HEK293 (cell line): ENCODE measurements at regions of chr20 and their contacts with region 1.

Region 1: DNA sequence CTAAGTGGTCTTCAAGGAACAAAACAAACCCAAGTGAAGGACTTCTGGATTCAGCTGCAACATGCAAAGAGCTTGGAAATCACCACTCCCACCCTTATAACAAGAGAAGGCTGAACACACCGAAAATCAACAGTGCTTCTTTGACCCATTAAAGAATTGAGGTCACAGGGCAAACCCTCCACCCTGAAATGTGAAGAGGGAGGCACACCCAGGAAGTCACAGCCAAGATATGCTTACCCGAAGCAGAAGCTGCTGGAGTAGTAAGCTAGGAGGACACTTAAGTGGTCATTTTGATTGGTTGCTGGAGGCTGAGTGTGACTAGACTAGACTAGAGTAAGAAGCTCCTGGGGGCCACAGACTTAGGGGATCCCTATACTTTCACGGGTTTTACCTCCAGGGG is 188.2 kb upstream of the SSTR4 start:
- H3K4me3 ChIP-seq: no peak overlapping the region
- H3K27ac ChIP-seq: no peak overlapping the region
- H3K4me1 ChIP-seq: peaks cover 4% of the 10 kb centered on the region; the same call in 1 of the 2 replicates
- CTCF ChIP-seq: no peak

Region 2: GRCh38 chr20:22861229-22861980 is 14.5 kb after region 1 on chr20:
- CTCF ChIA-PET with region 1: interaction called, 13 read pairs
- POLR2A ChIA-PET with region 1: no interaction called
- H3K4me3 ChIP-seq: no peak overlapping the region; the same call in 1 of the 2 replicates
- H3K27ac ChIP-seq: no peak overlapping the region
- H3K4me1 ChIP-seq: no peaks in the 10 kb centered on the region
- CTCF ChIP-seq: no peak